ENCODE measurements at regions of chr7 and their contacts with region 1.

Region 1: DNA sequence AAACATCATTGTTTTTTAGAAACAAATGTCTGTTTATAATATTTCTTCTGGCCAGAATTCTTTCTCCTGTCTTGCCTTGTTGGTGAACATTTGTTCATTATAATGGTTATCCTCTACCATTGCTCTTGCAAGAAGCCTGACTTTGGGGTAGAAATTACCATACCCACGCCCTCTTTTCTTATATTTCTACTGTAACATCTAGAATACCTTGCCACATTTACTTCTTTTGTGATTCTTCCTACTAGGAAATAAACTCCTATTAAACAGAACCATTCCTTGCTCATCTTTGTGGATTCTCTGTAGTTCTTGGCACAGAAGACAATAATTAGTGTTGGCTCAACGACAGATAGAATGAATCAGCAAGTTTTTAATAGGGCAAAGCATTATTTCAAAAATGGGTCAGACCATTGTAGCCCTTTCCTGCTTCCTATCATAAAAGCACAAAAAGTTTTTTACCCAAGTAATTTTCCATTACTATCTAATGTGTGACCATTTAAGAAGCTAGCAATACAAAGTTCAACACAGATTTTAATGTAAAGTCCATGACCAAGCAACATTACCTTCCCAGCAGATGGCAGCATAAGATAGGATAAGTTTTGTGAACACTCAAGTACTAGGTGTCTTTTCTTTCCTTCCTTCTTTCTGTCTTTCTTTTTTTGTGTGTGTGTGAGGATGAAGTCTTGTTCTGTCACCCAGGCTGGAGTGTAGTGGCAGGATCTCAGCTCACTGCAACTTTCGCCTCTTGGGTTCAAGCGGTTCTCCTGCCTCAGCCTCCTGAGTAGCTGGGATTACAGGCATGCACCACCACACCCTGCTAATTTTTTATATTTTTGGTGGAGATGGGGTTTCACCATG is 270.4 kb downstream of the HGF start:
- DNase-seq: peak; percentile 60
- H3K4me3 ChIP-seq: no peak overlapping the region
- H3K27me3 ChIP-seq: no peaks in the 10 kb centered on the region
- CTCF ChIP-seq: peak; percentile 51

Region 2: GRCh38 chr7:81482600-81483186 is 16.8 kb before region 1 on chr7:
- CTCF ChIA-PET with region 1: interaction called, 22 read pairs
- POLR2A ChIA-PET with region 1: interaction called, 3 read pairs
- DNase-seq: no peak
- H3K4me3 ChIP-seq: no peak overlapping the region
- H3K27me3 ChIP-seq: no peaks in the 10 kb centered on the region
- CTCF ChIP-seq: peak; percentile 47

Region 3: GRCh38 chr7:81488210-81488609 is 11.3 kb before region 1 on chr7:
- CTCF ChIA-PET with region 1: interaction called, 22 read pairs
- POLR2A ChIA-PET with region 1: interaction called, 3 read pairs
- DNase-seq: no peak
- H3K4me3 ChIP-seq: no peak overlapping the region
- H3K27me3 ChIP-seq: no peaks in the 10 kb centered on the region
- CTCF ChIP-seq: no peak

Region 4: DNA sequence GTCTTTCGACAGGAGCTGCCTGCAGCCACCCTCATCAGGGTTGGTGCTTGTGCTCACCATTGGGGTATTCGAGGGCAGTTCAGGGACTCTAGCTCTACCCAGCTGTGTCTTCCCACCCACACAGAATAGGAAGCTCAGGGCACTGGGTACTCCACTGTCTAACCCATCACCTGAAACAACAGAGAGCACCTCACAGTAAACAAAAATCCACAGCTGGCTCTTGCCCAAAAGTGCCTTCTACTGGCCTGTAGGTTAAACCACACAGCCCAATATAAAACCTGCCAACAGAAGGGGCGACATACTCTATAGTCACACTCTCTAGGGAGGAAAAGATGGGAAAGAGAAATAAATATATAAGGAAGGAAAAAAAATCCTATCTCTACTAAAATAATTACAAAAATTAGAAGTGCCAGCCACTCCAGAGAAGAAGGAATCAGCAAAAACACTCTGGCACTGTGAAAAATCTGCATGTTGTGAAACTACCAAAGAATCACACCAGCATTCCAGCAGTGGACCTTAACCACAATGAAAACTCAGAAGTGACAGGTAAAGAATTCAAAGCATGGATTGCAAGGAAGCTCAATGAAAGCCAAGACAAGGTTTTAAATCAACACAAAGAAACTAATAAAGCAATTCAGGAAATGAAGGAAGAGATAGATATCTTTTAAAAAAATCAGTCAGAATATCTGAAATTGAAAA is 160.4 kb after region 1 on chr7:
- CTCF ChIA-PET with region 1: no interaction called
- POLR2A ChIA-PET with region 1: no interaction called
- DNase-seq: no peak
- H3K4me3 ChIP-seq: no peak overlapping the region
- H3K27me3 ChIP-seq: no peaks in the 10 kb centered on the region
- CTCF ChIP-seq: no peak

Region 5: DNA sequence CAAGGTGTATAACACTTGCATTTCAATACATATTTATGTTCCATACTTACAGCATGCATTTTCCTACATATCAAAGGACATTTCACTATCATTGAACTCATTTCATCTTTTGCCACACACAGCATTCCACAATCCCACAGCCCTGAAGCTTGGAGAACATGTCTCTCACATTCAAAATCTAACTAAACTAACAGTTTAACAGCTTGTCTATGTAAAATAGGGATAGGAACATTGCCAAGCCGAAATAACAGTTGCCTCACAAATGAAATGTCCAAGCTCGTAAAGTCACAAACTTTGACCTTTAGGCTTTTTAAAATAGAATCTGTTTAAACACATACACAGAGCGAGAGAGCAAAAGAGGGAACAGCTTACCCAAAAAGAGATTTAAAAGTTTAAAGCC is 205.1 kb after region 1 on chr7:
- CTCF ChIA-PET with region 1: no interaction called
- POLR2A ChIA-PET with region 1: no interaction called
- DNase-seq: no peak
- H3K4me3 ChIP-seq: no peak overlapping the region
- H3K27me3 ChIP-seq: no peaks in the 10 kb centered on the region
- CTCF ChIP-seq: no peak

Region 6: GRCh38 chr7:81715984-81716588 is 216.6 kb after region 1 on chr7:
- CTCF ChIA-PET with region 1: interaction called, 14 read pairs
- POLR2A ChIA-PET with region 1: no interaction called
- DNase-seq: no peak
- H3K4me3 ChIP-seq: no peak overlapping the region
- H3K27me3 ChIP-seq: no peaks in the 10 kb centered on the region
- CTCF ChIP-seq: peak; percentile 25; the same call in 1 of the 2 replicates

Region 7: DNA sequence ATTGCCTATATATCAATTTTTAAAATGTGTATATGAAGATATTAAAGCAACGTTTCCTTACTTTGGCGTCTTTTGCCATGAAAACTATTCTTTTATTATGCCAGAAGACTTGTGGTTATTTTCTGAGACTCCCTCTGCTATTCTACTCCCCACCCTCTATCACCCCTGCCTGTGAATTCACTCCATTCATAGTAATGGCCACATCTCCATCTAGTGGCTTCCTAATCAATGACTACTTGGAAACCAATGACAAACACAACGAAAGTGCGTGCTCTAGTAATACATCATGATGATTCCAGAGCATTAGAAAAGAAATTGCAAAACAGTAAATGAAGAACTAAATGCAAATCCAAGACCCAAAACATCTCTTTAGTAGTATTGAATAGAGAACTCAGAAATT is 457.0 kb after region 1 on chr7:
- CTCF ChIA-PET with region 1: interaction called, 10 read pairs
- POLR2A ChIA-PET with region 1: no interaction called
- DNase-seq: no peak
- H3K4me3 ChIP-seq: no peak overlapping the region
- H3K27me3 ChIP-seq: no peaks in the 10 kb centered on the region
- CTCF ChIP-seq: peak; percentile 49

Region 8: GRCh38 chr7:82017334-82017943 is 518.0 kb after region 1 on chr7:
- CTCF ChIA-PET with region 1: interaction called, 32 read pairs
- POLR2A ChIA-PET with region 1: no interaction called
- DNase-seq: no peak
- H3K4me3 ChIP-seq: no peak overlapping the region
- H3K27me3 ChIP-seq: no peaks in the 10 kb centered on the region
- CTCF ChIP-seq: peak; percentile 51

Measured in BJ (cell line).